Colonic mucosa (tissue), 4 donors: ENCODE measurements at regions of chr9 and their contacts with region 1.

Region 1: DNA sequence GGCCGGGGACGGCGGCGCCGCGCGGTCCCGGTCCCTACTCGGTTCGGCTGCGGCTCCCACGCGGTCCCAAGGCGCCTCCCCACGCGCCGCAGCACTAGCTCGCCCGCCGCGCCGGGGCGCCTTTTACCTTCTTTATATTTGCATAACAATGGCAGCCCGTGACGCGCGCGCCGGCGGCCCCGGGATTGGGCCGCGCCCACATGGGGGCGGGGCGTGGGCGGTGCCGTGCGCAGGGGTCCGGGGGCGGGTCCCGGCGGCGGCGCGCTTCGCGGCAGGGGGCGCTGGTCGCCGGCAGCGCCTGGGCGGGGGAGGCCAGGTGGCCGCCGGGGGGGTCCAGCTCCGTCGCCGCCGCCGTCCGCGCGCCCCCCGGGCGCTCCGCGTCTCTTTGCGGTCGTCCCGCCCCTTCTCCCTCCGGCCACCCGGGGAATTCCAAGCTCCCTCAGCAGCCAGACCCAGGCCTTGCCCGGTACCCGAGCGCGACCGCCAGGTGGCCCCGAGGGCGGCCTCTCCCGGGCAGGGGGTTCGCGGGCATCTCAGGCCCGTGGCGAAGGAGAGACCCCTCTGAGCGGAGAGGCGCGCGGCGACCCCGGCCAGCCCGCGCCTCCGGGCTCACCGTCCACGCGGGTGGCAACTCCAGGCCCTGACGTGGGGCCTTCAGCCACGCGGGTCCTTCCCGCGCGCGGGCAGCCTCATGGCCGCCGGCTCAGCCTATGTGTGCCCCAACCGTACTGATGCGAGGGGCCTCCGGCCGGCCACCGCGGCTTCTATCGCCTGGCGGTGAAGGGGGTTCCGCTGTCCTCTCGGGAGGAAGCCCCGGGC is at the start of gene NRARP:
- DNase-seq: peak; percentile 95
- H3K4me3 ChIP-seq: peak within 1 kb of the TSS; percentile 66
- H3K27ac ChIP-seq: peak within 1 kb of the TSS; percentile 98
- H3K4me1 ChIP-seq: peaks cover 37% of the 10 kb centered on the region
- H3K27me3 ChIP-seq: peaks cover 11% of the 10 kb centered on the region
- CTCF ChIP-seq: peak; percentile 31
- total RNA-seq, gene NRARP: 120 to 178 TPM

Region 2: DNA sequence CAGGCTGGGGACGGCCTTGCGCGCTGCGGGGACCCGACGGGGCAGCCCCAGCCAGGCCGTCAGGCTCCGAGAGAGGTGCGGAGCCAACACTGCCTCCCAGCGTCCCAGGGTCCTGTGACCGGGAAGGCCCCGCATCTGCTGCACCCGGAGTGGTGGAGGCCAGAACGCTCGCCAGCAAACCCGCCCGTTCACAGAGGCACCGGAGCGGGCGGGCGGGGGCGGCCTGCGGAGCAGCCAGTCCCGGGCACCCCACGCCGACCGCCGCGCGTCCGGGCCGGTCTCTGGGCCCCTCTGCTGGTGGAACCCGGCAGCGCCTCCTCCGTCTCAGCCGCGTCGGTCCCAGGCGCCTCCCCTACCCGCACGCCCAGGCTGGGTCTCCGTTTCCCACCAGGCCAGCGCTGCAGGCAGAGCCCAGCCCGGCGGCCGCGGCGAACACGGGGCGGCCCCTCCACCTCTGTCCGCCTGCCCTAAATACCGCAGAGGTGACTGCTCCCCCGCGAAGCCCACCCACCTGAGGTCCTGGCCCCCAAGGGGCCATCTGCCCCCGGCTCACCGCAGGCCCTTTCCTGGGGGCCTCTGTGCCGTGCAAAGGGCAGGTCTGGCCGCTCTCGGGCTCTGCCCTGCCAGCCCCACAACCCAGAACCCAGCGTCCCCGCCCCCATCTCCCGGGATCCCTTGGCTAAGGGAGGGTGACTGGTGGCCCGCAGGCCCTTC is 104.6 kb after region 1 on chr9:
- intact Hi-C with region 1: loop called (anchors 5 kb)
- DNase-seq: peak; percentile 76
- H3K4me3 ChIP-seq: peak overlapping the region; percentile 34
- H3K27ac ChIP-seq: peak overlapping the region; percentile 23
- H3K4me1 ChIP-seq: peaks cover 21% of the 10 kb centered on the region
- H3K27me3 ChIP-seq: no peaks in the 10 kb centered on the region
- CTCF ChIP-seq: peak; percentile 81